Naive thymus-derived CD4-positive, alpha-beta T cell (primary cell): ENCODE measurements at regions of chr1 and their contacts with region 1.

Region 1: GRCh38 chr1:179293340-179294327 is at the start of gene SOAT1:
- DNase-seq: peak; percentile 85 to 94 (median 90)
- ATAC-seq: peak; percentile 98
- H3K4me3 ChIP-seq: peak within 1 kb of the TSS; percentile 78
- H3K4me3 Mint-ChIP-seq: peak within 1 kb of the TSS; percentile 83 to 97 (median 92)
- H3K27ac ChIP-seq: peak within 1 kb of the TSS; percentile 96
- H3K27ac Mint-ChIP-seq: peak within 1 kb of the TSS; percentile 79 to 97 (median 93)
- H3K4me1 ChIP-seq: peaks cover 21 to 33% of the 10 kb centered on the region in 2 donors
- H3K4me1 Mint-ChIP-seq: peaks cover 28 to 51% (median 45%) of the 10 kb centered on the region in 7 donors
- H3K27me3 ChIP-seq: no peaks in the 10 kb centered on the region
- H3K27me3 Mint-ChIP-seq: no peaks in the 10 kb centered on the region
- total RNA-seq, gene SOAT1: 40.6 to 52.8 (median 45.0) TPM

Region 2: DNA sequence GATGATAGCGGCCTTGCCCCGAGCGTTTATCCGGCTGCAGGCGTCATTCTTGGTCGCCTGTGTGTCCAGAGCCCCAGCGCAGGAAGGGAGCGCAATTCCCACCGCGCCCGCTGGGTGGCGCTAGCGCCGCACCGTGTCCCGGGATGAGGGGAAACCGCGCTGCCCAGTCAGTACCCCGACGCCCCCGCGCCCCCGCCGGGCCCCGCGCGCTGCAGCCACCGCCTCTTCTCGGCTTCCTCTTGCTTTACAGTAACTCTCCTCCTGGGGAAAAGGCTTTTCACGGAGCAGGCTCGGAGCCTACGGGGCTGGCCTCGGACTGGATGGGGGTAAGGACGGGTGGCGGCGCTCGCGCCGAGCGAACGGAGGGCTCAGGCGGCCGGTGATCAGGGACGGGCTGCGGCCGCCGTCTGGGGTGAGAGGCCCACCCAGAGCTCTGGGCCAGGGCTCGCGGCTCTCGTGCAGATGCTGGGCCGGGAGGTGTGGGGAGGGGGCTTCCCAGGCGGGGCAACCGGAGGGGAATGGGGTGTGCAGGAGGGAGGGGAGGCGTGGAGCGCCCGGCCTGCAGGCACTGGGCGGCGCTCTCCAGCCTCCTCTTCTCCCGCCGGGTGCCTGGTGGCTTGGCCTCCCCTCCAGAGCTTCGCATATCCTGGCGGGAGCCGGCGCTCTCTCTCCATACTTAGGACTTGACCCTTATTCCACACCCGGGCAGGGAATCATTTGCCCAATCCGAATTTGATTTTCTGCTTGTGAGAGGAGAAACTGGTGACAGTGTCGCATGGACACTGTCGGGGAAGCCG is 750.9 kb before region 1 on chr1:
- CTCF ChIA-PET with region 1: no interaction called
- POLR2A ChIA-PET with region 1: no interaction called
- intact Hi-C with region 1: loop called (anchors 2 kb)
- DNase-seq: peak; percentile 61 to 98 (median 87)
- ATAC-seq: peak; percentile 96
- H3K4me3 ChIP-seq: peak overlapping the region; percentile 99
- H3K4me3 Mint-ChIP-seq: peak overlapping the region; percentile 89 to 96 (median 92)
- H3K27ac ChIP-seq: peak overlapping the region; percentile 56
- H3K27ac Mint-ChIP-seq: peak overlapping the region; percentile 32 to 88 (median 83)
- H3K4me1 ChIP-seq: peaks cover 0 to 5% of the 10 kb centered on the region in 2 donors
- H3K4me1 Mint-ChIP-seq: peaks cover 0 to 15% (median 10%) of the 10 kb centered on the region in 7 donors
- H3K27me3 ChIP-seq: no peaks in the 10 kb centered on the region
- H3K27me3 Mint-ChIP-seq: no peaks in the 10 kb centered on the region

Region 3: DNA sequence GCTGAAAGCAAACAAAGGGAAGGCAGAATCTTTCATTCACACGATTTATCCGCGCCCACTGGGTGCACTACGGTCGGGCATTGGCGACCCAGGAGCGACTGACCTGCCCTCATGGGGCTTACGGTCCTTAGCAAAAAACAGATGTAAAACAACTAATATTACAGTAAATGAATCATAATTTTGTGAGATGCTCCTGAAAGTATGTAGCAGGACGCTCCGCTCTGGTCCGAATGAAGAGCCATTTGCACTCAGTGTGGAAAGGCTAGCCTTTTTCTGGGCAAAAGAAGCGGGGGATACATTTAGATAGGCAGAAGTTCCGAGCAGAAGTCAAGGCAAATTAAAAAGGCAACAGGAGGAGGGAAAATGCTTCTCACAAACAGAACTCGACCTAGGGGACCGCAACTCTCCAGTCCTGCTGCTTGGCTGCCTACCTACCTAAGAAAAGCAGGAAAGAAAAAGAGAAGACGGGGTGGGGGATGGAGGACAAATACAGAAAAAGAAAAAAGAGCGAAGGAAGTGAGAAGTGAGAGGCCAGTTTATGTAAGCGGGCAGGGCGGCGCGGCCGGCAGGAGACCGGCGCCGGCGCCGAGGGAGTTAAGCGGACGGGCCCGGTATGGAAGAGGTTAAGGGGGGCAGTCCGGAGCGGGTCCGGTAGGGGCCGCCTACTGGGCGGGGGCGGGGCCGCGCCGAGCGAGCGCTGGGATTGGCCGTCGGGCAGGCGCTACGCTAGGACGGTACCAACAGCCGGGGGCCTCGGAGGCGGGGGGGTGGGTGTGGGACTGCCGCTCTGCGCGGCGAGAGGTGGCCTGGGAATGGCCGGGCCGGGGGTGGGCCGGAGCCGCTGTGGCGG is 268.3 kb before region 1 on chr1 and contains the start of gene FAM20B:
- CTCF ChIA-PET with region 1: no interaction called
- POLR2A ChIA-PET with region 1: no interaction called
- intact Hi-C with region 1: loop called (anchors 1 to 2 kb)
- DNase-seq: peak; percentile 80 to 89 (median 86)
- ATAC-seq: peak; percentile 95
- H3K4me3 ChIP-seq: peak within 1 kb of the TSS; percentile 71
- H3K4me3 Mint-ChIP-seq: peak within 1 kb of the TSS; percentile 87 to 98 (median 91)
- H3K27ac ChIP-seq: peak within 1 kb of the TSS; percentile 84
- H3K27ac Mint-ChIP-seq: peak within 1 kb of the TSS; percentile 86 to 92 (median 89)
- H3K4me1 ChIP-seq: peaks cover 10 to 17% of the 10 kb centered on the region in 2 donors
- H3K4me1 Mint-ChIP-seq: peaks cover 35 to 60% (median 50%) of the 10 kb centered on the region in 7 donors
- H3K27me3 ChIP-seq: no peaks in the 10 kb centered on the region
- H3K27me3 Mint-ChIP-seq: peaks cover 0 to 31% (median 0%) of the 10 kb centered on the region in 5 donors
- total RNA-seq, gene FAM20B: 14.3 to 27.9 (median 25.2) TPM

Region 4: GRCh38 chr1:179129702-179130473 is 163.7 kb before region 1 on chr1:
- CTCF ChIA-PET with region 1: no interaction called
- POLR2A ChIA-PET with region 1: interaction called, 5 read pairs
- intact Hi-C with region 1: loop called (anchors 2 kb)
- DNase-seq: peak in 8 of 9 donors; percentile 28 to 83 (median 72)
- ATAC-seq: peak; percentile 95
- H3K4me3 ChIP-seq: peak overlapping the region; percentile 38
- H3K4me3 Mint-ChIP-seq: peak overlapping the region; percentile 63 to 93 (median 80)
- H3K27ac ChIP-seq: peak overlapping the region; percentile 79
- H3K27ac Mint-ChIP-seq: peak overlapping the region; percentile 87 to 96 (median 94)
- H3K4me1 ChIP-seq: peaks cover 4 to 17% of the 10 kb centered on the region in 2 donors
- H3K4me1 Mint-ChIP-seq: peaks cover 3 to 33% (median 22%) of the 10 kb centered on the region in 7 donors
- H3K27me3 ChIP-seq: no peaks in the 10 kb centered on the region
- H3K27me3 Mint-ChIP-seq: no peaks in the 10 kb centered on the region

Region 5: DNA sequence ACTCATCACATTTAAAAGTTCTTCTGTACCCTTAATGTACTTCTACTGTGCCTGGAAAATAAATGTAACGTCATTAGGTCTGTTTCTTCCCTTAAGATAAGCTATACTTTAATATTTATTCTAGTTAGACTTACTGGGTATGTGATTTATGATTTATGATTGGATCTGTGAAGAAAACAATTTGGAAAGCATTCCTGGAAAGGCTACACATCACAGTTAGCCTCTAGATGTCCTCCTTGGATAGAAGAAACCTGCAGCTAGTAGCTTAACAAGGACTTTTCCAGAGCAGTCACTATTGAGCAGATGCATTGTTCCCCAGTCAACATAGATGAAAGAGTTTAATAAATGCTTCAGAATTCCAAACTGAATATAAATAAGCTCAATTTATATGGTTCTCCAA is 42.0 kb before region 1 on chr1:
- CTCF ChIA-PET with region 1: interaction called, 3 read pairs
- POLR2A ChIA-PET with region 1: interaction called, 3 read pairs
- intact Hi-C with region 1: loop called in 1 of 2 experiments (anchors 2 kb)
- DNase-seq: peak in 3 of 9 donors; percentile 9 to 22 (median 12)
- ATAC-seq: no peak
- H3K4me3 ChIP-seq: no peak overlapping the region
- H3K4me3 Mint-ChIP-seq: no peak overlapping the region
- H3K27ac ChIP-seq: no peak overlapping the region
- H3K27ac Mint-ChIP-seq: peak overlapping the region in 1 of 9 donors; percentile 26
- H3K4me1 ChIP-seq: no peaks in the 10 kb centered on the region
- H3K4me1 Mint-ChIP-seq: no peaks in the 10 kb centered on the region
- H3K27me3 ChIP-seq: no peaks in the 10 kb centered on the region
- H3K27me3 Mint-ChIP-seq: no peaks in the 10 kb centered on the region

Region 6: DNA sequence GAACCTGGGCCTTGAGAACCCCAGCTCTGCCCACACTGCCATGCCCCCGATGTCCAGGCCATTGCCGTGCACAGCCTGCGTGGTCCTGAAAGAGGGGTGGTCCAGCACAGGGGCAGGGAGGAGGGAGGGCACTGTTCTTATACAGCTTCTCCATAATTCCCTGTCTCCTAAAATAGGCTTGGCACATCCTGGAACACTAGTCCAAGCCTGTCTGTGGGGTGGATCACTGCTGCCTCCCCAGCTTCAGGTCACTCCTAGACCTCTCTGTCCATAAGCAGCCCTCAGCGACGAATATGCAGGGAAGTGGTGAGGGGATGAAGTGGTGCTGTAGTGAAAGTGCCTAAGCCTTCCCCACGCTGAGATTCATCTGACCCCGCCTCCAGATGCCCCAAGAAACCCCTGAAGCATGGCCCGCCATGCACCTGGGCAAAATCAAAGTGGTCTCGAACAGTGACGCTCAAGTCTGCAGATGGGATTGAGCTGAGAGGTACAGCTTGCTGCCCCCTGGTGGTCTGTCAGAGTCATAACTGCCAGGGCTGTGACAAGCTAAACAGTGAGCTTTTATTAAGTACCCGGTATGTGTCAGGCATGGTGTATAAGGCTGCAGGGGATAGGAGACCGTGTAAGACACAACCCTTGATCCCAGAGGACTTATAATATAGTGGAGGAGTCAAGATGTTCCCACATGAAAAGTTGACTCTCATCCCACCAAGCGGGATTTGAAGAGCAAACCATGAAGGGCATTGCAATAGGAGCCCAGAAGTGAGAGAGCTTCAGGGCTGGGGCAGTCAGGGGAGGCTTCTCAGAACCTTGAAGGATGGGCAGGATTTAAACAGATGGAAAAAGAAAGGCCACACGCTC is 516.1 kb after region 1 on chr1:
- CTCF ChIA-PET with region 1: no interaction called
- POLR2A ChIA-PET with region 1: no interaction called
- intact Hi-C with region 1: loop called in 1 of 2 experiments (anchors 2 kb)
- DNase-seq: peak; percentile 53 to 82 (median 78)
- ATAC-seq: peak; percentile 87
- H3K4me3 ChIP-seq: no peak overlapping the region
- H3K4me3 Mint-ChIP-seq: peak overlapping the region in 5 of 10 donors; percentile 20 to 46 (median 32)
- H3K27ac ChIP-seq: no peak overlapping the region
- H3K27ac Mint-ChIP-seq: peak overlapping the region in 6 of 9 donors; percentile 2 to 82 (median 26)
- H3K4me1 ChIP-seq: peaks cover 6 to 13% of the 10 kb centered on the region in 2 donors
- H3K4me1 Mint-ChIP-seq: peaks cover 1 to 13% (median 12%) of the 10 kb centered on the region in 7 donors
- H3K27me3 ChIP-seq: no peaks in the 10 kb centered on the region
- H3K27me3 Mint-ChIP-seq: peaks cover 0 to 6% (median 0%) of the 10 kb centered on the region in 5 donors

Region 7: GRCh38 chr1:180154325-180155181 is 860.9 kb after region 1 on chr1 and contains the start of gene QSOX1:
- CTCF ChIA-PET with region 1: no interaction called
- POLR2A ChIA-PET with region 1: no interaction called
- intact Hi-C with region 1: loop called in 1 of 2 experiments (anchors 10 kb)
- DNase-seq: peak; percentile 81 to 89 (median 86)
- ATAC-seq: peak; percentile 97
- H3K4me3 ChIP-seq: peak within 1 kb of the TSS; percentile 94
- H3K4me3 Mint-ChIP-seq: peak within 1 kb of the TSS; percentile 80 to 99 (median 91)
- H3K27ac ChIP-seq: peak within 1 kb of the TSS; percentile 78
- H3K27ac Mint-ChIP-seq: peak within 1 kb of the TSS; percentile 81 to 95 (median 86)
- H3K4me1 ChIP-seq: peaks cover 7 to 20% of the 10 kb centered on the region in 2 donors
- H3K4me1 Mint-ChIP-seq: peaks cover 24 to 45% (median 37%) of the 10 kb centered on the region in 7 donors
- H3K27me3 ChIP-seq: no peaks in the 10 kb centered on the region
- H3K27me3 Mint-ChIP-seq: no peaks in the 10 kb centered on the region
- total RNA-seq, gene QSOX1: 22.1 to 55.6 (median 25.6) TPM